CD4-positive, alpha-beta T cell (primary cell): ENCODE measurements at regions of chr19 and their contacts with region 1.

Region 1: GRCh38 chr19:49640113-49640898 is at the start of gene RRAS:
- DNase-seq: peak; percentile 97 to 100 (median 99)
- ATAC-seq: peak; percentile 66
- H3K4me3 ChIP-seq: peak within 1 kb of the TSS; percentile 78
- H3K4me3 Mint-ChIP-seq: peak within 1 kb of the TSS; percentile 95
- H3K27ac ChIP-seq: peak within 1 kb of the TSS; percentile 91 to 96
- H3K27ac Mint-ChIP-seq: peak within 1 kb of the TSS; percentile 97
- H3K4me1 ChIP-seq: peaks cover 64% of the 10 kb centered on the region
- H3K4me1 Mint-ChIP-seq: peaks cover 65% of the 10 kb centered on the region
- H3K27me3 ChIP-seq: no peaks in the 10 kb centered on the region
- H3K27me3 Mint-ChIP-seq: no peaks in the 10 kb centered on the region
- CTCF ChIP-seq: no peak
- total RNA-seq, gene RRAS: 4.2 to 4.7 TPM

Region 2: GRCh38 chr19:49451430-49452181 is 188.7 kb before region 1 on chr19 and contains the start of gene PIH1D1:
- CTCF ChIA-PET with region 1: no interaction called
- POLR2A ChIA-PET with region 1: interaction called, 11 read pairs
- intact Hi-C with region 1: no loop called
- DNase-seq: peak; percentile 84 to 98 (median 92)
- ATAC-seq: peak; percentile 61
- H3K4me3 ChIP-seq: peak within 1 kb of the TSS; percentile 99
- H3K4me3 Mint-ChIP-seq: peak within 1 kb of the TSS; percentile 94
- H3K27ac ChIP-seq: peak within 1 kb of the TSS; percentile 93 to 97
- H3K27ac Mint-ChIP-seq: peak within 1 kb of the TSS; percentile 98
- H3K4me1 ChIP-seq: peaks cover 69% of the 10 kb centered on the region
- H3K4me1 Mint-ChIP-seq: peaks cover 50% of the 10 kb centered on the region
- H3K27me3 ChIP-seq: no peaks in the 10 kb centered on the region
- H3K27me3 Mint-ChIP-seq: no peaks in the 10 kb centered on the region
- CTCF ChIP-seq: no peak
- total RNA-seq, gene PIH1D1: 145 to 151 TPM

Region 3: DNA sequence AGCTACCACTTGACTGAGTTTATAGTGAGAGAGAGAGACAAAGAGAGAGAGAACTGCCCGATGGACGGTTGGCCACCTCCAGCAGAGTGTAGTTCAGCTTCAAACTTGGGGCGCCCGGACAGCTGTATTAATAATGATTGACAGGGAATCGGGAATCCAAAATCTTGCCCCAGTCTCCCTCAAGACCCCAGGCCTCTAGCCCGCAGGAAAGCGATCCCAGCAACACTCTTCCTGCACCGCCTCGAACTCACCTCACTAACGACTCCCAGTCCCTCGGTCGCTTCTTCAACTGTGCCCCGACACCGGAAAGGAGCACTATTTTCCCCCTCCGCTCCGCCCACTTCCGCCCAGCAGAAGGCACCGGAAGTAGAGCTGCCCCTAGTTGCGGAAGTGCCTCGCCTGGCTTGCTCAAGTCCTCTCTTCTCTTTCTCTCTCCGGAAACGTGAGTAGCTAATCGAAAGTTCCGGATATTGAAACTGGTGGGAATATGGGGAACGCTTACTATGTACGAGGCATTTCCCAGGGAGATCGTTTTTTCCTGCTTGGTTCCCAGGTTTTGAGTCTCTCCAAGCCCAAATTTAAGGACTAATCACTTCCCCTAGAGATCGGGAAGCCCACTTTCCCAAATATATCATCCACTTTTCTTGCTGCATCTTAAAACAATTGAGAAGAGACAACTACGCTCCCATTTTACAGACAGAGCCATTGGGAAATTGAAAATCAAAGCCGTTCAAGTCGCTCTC is 59.9 kb before region 1 on chr19 and contains the start of gene NOSIP:
- CTCF ChIA-PET with region 1: no interaction called
- POLR2A ChIA-PET with region 1: interaction called, 17 read pairs
- intact Hi-C with region 1: no loop called
- DNase-seq: peak; percentile 93 to 98 (median 96)
- ATAC-seq: peak; percentile 98
- H3K4me3 ChIP-seq: peak within 1 kb of the TSS; percentile 75
- H3K4me3 Mint-ChIP-seq: peak within 1 kb of the TSS; percentile 90
- H3K27ac ChIP-seq: peak within 1 kb of the TSS in 1 of 2 donors; percentile 8
- H3K27ac Mint-ChIP-seq: peak within 1 kb of the TSS; percentile 67
- H3K4me1 ChIP-seq: peaks cover 18% of the 10 kb centered on the region
- H3K4me1 Mint-ChIP-seq: peaks cover 33% of the 10 kb centered on the region
- H3K27me3 ChIP-seq: no peaks in the 10 kb centered on the region
- H3K27me3 Mint-ChIP-seq: no peaks in the 10 kb centered on the region
- CTCF ChIP-seq: no peak
- total RNA-seq, gene NOSIP: 202 to 203 TPM

Region 4: DNA sequence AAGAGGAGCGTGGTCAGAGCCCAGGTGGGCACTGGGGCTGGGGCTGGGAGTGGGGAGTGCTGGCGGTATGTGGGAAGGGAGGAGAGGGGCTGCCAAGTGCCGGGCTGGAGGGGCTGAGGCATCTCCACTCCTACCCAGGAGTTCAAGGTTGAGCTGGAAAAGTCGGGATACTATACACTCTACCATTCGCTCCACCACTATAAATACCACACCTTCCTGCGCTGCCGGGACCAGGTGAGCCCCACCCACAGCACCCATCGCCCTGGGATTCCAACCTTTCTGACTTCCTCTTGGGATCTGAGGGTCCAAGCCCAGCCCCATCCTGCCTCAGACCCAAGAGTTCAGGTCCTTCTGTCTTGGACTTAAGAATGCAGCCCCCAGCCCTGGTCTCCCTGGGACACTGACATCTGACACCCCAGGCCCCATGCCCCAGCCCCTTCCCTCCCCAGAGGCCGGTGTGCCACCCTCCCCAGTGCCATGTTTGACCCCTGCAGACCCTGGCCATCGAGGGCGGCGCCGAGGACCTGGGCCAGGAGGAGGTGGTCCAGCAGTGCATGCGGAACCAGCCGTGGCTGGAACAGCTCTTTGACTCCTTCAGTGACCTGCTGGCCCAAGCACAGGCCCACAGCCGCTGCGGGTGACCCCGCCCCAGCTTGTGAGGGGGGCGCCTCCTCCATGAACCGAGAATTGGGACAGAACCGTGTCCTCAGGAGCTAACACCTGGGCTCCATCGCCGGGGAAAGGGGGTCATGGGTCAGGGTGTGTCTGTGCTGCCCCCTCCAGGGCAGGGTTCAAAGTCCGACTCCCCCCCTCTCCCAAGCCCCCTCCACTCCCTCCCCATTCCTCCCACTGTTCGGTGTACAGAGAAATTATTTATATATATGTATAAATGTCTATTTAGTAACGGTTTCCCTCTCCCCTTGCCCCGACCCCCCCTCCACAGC is 15.1 kb before region 1 on chr19:
- CTCF ChIA-PET with region 1: no interaction called
- POLR2A ChIA-PET with region 1: interaction called, 11 read pairs
- intact Hi-C with region 1: loop called in 1 of 2 experiments (anchors 2 kb)
- DNase-seq: no peak
- ATAC-seq: no peak
- H3K4me3 ChIP-seq: no peak overlapping the region
- H3K4me3 Mint-ChIP-seq: no peak overlapping the region
- H3K27ac ChIP-seq: no peak overlapping the region
- H3K27ac Mint-ChIP-seq: no peak overlapping the region
- H3K4me1 ChIP-seq: no peaks in the 10 kb centered on the region
- H3K4me1 Mint-ChIP-seq: peaks cover 5% of the 10 kb centered on the region
- H3K27me3 ChIP-seq: no peaks in the 10 kb centered on the region
- H3K27me3 Mint-ChIP-seq: no peaks in the 10 kb centered on the region
- CTCF ChIP-seq: no peak

Region 5: DNA sequence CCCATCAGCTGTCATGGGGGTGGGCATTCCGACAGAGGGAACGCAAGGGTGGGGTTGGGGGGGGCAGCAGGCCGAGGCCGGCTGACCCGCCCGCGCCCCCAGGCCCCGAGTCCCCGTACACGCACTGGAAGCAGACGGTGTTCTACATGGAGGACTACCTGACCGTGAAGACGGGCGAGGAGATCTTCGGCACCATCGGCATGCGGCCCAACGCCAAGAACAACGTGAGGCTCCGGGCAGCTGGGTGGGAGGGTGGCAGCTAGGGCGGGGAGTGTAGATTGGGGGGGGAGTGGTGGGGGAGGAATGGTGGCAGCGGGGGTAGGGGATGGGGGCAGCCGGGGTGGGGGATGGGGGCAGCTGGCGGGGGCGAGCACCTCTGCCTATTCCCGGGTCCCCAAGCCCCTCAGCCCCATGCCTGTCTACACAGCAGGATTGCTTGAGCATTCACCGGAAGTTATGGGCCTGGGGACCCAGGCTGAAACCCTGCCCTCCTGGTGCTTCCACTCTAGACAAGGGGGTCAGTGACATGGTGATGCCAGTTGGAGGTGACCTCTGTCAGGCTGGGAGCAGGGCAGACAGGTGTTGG is 46.3 kb after region 1 on chr19:
- CTCF ChIA-PET with region 1: no interaction called
- POLR2A ChIA-PET with region 1: no interaction called
- intact Hi-C with region 1: no loop called
- DNase-seq: no peak
- ATAC-seq: no peak
- H3K4me3 ChIP-seq: no peak overlapping the region
- H3K4me3 Mint-ChIP-seq: no peak overlapping the region
- H3K27ac ChIP-seq: no peak overlapping the region
- H3K27ac Mint-ChIP-seq: no peak overlapping the region
- H3K4me1 ChIP-seq: peaks cover 30% of the 10 kb centered on the region
- H3K4me1 Mint-ChIP-seq: peaks cover 21% of the 10 kb centered on the region
- H3K27me3 ChIP-seq: peaks cover 10 to 12% of the 10 kb centered on the region in 2 experiments
- H3K27me3 Mint-ChIP-seq: peaks cover 15% of the 10 kb centered on the region
- CTCF ChIP-seq: no peak

Region 6: DNA sequence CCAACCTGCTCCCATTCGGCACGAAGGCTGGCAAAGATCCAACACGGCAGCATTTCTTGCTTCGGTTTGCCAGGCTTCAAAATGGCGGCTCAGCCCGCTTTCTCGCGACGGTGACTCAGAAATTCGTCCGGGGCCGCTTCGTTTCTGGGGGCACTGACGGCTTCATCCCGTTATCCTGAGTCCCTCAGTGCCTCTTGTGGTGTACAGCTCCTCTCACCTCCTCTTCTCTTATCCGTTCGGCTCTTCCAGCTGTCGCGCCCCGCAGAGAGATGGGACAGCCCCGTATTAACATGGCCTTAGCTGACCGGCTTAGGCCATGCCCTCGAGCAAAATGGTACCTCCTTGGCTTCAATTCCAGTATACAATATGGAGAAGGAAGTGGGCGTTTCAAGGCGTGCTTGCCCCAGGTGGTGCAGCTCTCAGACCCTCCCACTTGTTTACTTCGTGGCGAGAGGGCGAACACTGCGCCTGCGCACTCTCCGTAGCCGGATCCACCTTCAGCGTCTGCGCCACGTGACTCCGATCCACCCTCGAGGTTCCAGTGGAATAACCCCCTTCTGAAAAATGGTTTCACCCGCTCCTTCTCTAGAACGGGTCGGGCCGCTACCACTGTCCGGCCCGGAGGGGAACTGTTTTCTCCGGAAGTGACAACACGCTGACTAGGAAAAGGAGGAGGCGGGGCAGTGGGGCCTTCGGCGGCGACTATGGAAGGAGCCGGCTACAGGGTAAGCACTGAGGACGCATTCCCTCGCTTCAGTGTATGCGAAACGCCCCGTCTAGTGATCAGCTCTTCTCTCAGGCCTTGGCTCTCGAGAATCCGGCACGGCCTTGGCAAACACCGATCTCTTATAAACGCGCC is 236.9 kb after region 1 on chr19 and contains the starts of genes AKT1S1 and TBC1D17:
- CTCF ChIA-PET with region 1: no interaction called
- POLR2A ChIA-PET with region 1: interaction called, 9 read pairs
- intact Hi-C with region 1: loop called in 1 of 2 experiments (anchors 5 kb)
- DNase-seq: peak; percentile 95 to 100 (median 98)
- ATAC-seq: peak; percentile 60
- H3K4me3 ChIP-seq: peak within 1 kb of the TSS; percentile 88
- H3K4me3 Mint-ChIP-seq: no peak within 1 kb of the TSS
- H3K27ac ChIP-seq: peak within 1 kb of the TSS; percentile 98 to 100
- H3K27ac Mint-ChIP-seq: no peak within 1 kb of the TSS
- H3K4me1 ChIP-seq: peaks cover 35% of the 10 kb centered on the region
- H3K4me1 Mint-ChIP-seq: peaks cover 18% of the 10 kb centered on the region
- H3K27me3 ChIP-seq: no peaks in the 10 kb centered on the region
- H3K27me3 Mint-ChIP-seq: no peaks in the 10 kb centered on the region
- CTCF ChIP-seq: no peak
- total RNA-seq, gene AKT1S1: 15.1 to 15.8 TPM
- total RNA-seq, gene TBC1D17: 35.5 to 35.8 TPM